ENCODE measurements at regions of chr10 and their contacts with region 1.

Region 1: DNA sequence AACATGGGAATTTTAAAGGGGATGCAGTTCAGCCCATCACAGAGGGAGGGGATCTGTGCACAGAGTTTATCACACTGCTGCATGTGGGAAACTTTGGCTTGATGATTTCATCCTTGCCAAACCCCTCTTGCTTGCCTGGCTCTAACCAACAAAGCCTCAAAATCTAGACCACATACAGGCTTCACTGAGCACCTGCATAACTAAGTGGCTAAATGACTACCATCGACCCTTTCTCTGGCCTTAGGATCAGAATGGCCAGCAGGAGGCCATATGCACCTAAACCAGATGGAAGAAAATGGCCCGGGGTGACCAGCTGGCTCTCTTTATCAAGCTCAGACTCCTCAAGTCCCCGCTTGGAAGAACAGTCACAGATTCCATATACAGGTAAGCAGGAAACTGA is 15.6 kb upstream of the ZNF25 start:
- DNase-seq: no peak
- H3K4me3 ChIP-seq: no peak overlapping the region
- H3K27ac ChIP-seq: no peak overlapping the region
- H3K4me1 ChIP-seq: no peaks in the 10 kb centered on the region
- H3K27me3 ChIP-seq: no peaks in the 10 kb centered on the region
- CTCF ChIP-seq: peak in 1 of 2 donors; percentile 13

Region 2: DNA sequence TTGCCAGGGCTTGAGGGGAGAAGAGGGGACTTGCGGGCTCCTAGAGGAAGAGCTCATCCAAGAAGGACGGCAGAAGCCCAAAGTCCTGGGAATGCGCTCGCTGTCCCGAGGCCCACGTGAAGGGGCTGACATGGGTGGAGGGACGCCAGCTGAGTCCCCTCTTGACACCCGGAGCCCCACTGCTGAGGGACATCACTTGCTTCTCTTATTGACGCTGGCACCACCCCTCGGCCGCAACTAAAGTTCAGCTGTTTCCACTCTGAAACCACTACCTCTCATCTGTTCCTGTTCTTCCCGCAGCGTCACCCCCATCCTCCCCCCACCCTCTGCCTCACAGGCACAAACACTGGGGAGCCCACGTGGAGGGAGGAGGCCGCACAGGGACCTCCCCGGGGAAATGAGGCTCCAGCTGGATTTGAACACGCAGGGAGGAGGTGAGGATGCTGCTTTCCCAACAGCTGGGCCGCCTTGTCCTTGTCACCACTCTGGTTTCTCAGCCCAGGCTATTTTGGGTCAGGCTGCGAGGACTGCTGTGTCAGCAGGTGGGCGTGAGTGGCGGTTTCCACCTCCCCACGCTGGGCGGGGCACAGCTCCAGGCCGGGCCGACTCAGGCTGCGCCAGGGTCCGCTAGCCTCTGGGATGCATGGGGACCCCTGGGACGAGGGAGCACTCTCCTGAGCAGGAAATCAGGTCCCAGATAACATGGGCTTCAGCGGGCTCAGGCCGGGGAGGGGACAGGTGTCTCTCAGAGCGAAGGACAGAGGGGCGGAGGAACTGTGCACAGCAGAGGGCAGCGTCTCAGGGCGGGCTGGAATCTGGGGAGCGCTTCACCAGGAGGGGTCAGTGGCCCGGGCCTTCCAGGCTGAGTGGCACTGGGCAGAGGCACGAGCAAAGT is 290.9 kb before region 1 on chr10:
- CTCF ChIA-PET with region 1: no interaction called
- dilution Hi-C with region 1: no loop called
- in situ Hi-C with region 1: no loop called
- intact Hi-C with region 1: no loop called
- DNase-seq: no peak
- H3K4me3 ChIP-seq: no peak overlapping the region
- H3K27ac ChIP-seq: no peak overlapping the region
- H3K4me1 ChIP-seq: no peaks in the 10 kb centered on the region
- H3K27me3 ChIP-seq: no peaks in the 10 kb centered on the region
- CTCF ChIP-seq: no peak

Region 3: DNA sequence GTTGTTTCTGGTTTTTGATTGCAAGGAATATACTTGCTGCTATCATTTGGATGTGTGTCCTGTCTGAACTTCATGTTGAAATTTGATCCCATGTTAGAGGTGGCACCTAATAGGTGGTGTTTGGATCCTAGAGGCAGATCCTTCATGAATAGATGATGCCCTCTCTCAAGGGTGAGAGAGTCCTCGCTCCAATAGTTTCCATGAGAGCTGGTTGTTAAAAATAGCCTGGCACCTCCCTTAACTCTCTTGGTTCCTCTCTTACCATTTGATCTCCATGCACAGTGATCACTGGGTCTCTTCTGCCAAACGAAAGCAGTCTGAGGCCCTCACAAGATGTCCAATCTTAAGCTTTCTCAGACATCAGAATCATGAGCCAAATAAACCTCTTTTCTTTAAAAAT is 85.7 kb before region 1 on chr10:
- CTCF ChIA-PET with region 1: no interaction called
- dilution Hi-C with region 1: no loop called
- in situ Hi-C with region 1: no loop called
- intact Hi-C with region 1: no loop called
- DNase-seq: no peak
- H3K4me3 ChIP-seq: no peak overlapping the region
- H3K27ac ChIP-seq: no peak overlapping the region
- H3K4me1 ChIP-seq: no peaks in the 10 kb centered on the region
- H3K27me3 ChIP-seq: no peaks in the 10 kb centered on the region
- CTCF ChIP-seq: no peak

Region 4: GRCh38 chr10:37947526-37947925 is 44.6 kb before region 1 on chr10:
- CTCF ChIA-PET with region 1: no interaction called
- dilution Hi-C with region 1: no loop called
- in situ Hi-C with region 1: no loop called
- intact Hi-C with region 1: no loop called
- DNase-seq: no peak
- H3K4me3 ChIP-seq: no peak overlapping the region
- H3K27ac ChIP-seq: no peak overlapping the region
- H3K4me1 ChIP-seq: no peaks in the 10 kb centered on the region
- H3K27me3 ChIP-seq: no peaks in the 10 kb centered on the region
- CTCF ChIP-seq: no peak

Region 5: DNA sequence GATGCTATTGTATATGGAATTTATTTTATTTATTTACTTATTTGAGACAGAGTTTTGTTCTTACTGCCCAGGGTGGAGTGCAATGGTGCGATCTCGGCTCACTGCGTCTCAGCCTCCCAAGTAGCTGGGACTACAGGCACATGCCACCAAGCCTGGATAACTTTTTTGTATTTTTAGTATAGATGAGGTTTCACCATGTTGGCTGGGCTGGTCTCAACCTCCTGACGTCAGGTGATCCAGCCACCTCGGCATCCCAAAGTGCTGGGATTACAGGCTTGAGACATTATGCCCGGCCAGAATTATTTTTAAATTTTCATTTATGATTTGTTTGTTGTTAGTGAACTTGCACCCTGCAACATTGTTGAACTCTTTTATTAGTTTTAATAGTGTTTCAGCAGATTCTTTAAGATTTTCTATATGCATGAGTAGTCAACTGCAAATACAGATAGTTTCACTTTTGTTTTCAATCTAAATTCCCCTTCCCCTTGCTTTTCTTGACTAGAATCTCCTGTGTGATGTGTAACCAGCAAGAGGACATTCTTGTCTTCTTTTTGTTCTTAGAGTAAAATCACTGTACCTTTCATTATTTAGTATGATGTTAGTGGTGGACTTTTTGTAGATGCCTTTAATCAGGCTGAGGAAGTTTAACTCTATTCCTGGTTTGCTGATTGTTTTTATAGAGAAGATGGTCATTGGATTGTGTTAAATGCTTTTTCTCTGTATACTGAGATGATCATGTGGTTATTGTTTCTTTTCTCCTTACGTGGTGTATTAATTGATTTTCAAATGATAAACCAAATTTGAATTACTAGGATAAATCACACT is 46.2 kb after region 1 on chr10:
- CTCF ChIA-PET with region 1: no interaction called
- dilution Hi-C with region 1: no loop called
- in situ Hi-C with region 1: no loop called
- intact Hi-C with region 1: loop called (anchors 5 kb)
- DNase-seq: no peak
- H3K4me3 ChIP-seq: no peak overlapping the region
- H3K27ac ChIP-seq: no peak overlapping the region
- H3K4me1 ChIP-seq: no peaks in the 10 kb centered on the region
- H3K27me3 ChIP-seq: no peaks in the 10 kb centered on the region
- CTCF ChIP-seq: no peak

Measured in mammary epithelial cell (primary cell).